BJ (cell line): ENCODE measurements at regions of chr4 and their contacts with region 1.

Region 1: GRCh38 chr4:168153596-168154440 is 61.5 kb downstream of the ANXA10 start:
- DNase-seq: no peak
- H3K4me3 ChIP-seq: no peak overlapping the region
- H3K27me3 ChIP-seq: peaks cover 2% of the 10 kb centered on the region; the same call in 1 of the 2 replicates
- CTCF ChIP-seq: peak; percentile 73

Region 2: DNA sequence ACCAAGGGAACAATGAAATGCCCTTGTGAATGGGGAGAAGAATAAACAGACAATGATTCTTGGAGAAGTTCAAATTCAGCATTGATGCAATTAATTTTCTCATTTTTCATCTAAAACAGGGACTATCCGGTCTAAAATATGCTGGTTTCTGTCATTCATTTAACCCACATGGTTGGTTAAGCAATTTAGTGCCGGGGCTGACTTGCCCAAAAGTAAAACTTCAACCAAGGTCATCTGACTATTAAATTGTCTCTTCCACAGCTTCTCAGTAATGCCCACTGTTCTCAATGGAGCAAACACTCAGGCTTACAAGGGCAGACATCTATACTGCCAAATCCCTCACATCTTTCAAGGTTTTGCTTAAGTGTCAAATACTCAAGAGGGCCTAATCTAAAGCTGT is 10.2 kb before region 1 on chr4:
- CTCF ChIA-PET with region 1: interaction called, 20 read pairs
- POLR2A ChIA-PET with region 1: no interaction called
- DNase-seq: no peak
- H3K4me3 ChIP-seq: no peak overlapping the region
- H3K27me3 ChIP-seq: no peaks in the 10 kb centered on the region
- CTCF ChIP-seq: no peak

Region 3: DNA sequence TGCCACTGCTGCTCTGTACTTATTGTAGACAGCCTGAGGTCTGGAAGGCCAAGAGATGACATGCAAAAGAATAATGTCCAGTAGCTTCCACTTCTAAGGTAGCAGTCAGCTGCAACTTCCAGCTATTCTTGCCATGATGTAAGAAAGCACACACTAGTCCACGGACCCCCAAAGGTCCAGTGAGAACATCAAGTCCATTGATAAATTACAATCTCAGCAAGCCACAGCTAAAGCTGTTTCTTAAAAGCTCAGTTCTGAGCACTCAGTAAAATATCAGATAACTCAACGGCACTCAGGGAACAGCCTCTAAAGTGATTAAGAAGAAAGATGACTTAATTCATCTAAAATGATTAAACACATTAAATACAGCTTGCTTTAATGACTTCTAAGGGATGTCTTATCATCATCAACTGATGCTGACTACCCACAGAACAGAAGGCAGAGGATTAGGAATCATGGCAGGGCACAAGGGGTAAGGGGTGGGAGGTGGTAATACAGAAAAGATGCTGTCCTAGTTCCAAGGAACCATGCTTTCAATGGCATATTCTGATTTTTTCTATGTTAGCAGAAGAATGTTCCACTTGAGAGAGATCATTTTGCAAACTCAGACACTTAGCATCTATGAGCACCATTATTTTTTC is 955.3 kb after region 1 on chr4:
- CTCF ChIA-PET with region 1: no interaction called
- POLR2A ChIA-PET with region 1: interaction called, 14 read pairs
- DNase-seq: no peak
- H3K4me3 ChIP-seq: no peak overlapping the region
- H3K27me3 ChIP-seq: no peaks in the 10 kb centered on the region
- CTCF ChIP-seq: no peak